ENCODE measurements at regions of chr10 and their contacts with region 1.

Region 1: DNA sequence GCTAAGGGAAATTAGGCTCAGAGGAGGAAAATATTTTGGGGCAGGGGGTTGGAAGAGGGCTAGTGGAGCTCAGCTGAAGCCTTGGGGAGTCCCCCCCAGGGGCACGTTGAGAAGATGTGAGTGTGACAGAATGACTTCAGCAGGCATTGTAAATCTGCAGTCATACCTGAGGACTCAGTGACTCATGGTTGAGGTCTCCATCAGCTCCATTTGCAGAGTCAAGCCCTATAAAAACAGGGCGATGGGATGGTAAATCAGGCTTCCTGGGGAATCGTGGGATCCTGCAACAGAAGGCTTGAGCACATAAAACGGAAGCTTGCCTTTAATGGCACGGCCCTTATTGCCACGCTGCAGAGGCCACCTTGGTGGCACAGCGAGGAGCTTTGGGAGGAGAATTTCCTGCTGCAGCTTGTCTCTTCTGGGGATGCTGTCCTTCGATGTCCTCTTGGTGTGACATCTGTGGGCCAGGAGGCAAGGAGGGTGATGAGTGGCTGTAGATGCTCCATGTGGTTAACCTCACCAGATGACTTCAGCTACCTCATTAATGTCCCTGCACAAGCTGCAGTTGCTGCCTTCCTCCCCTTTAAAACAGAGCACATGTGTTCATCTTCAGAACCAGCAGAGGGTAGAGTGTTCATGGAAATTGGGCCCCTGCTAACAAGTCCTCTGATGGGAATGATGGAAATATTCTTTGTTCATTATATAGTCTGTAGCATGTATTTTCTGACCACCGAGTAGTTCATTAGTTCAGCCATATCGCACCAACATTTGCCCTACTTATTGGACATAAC is 285.9 kb downstream of the LRMDA start:
- DNase-seq: peak; percentile 74
- ATAC-seq: peak; percentile 76
- H3K4me3 ChIP-seq: no peak overlapping the region
- H3K27ac ChIP-seq: no peak overlapping the region
- H3K4me1 ChIP-seq: peaks cover 7% of the 10 kb centered on the region; the same call in 1 of the 2 replicates
- H3K27me3 ChIP-seq: peaks cover 44% of the 10 kb centered on the region
- CTCF ChIP-seq: peak; percentile 47; the same call in 1 of the 2 replicates

Region 2: GRCh38 chr10:73810735-73811465 is 1906.4 kb before region 1 on chr10:
- CTCF ChIA-PET with region 1: no interaction called
- POLR2A ChIA-PET with region 1: interaction called, 13 read pairs
- intact Hi-C with region 1: no loop called
- DNase-seq: peak; percentile 68
- ATAC-seq: peak; percentile 42
- H3K4me3 ChIP-seq: peak overlapping the region; percentile 79
- H3K27ac ChIP-seq: peak overlapping the region; percentile 22
- H3K4me1 ChIP-seq: peaks cover 4% of the 10 kb centered on the region
- H3K27me3 ChIP-seq: no peaks in the 10 kb centered on the region
- CTCF ChIP-seq: no peak

Region 3: DNA sequence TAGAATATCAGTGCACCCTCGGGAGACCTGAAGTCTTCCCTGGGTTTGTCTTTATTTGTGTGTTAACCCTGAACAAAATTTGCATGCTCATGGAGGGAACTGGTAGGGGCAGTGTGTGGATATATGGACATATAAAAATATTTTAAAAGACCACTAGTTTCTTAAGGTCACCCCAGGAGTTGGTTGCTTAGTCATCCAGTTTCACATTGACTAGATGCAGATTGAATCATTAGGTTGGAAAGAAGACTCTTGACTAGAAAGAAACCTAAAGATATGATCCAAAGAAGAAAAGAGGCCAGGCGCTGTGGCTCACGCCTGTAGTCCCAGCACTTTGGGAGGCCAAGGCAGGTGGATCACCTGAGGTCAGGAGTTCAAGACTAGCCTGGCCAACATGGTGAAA is 753.8 kb before region 1 on chr10:
- CTCF ChIA-PET with region 1: no interaction called
- POLR2A ChIA-PET with region 1: no interaction called
- intact Hi-C with region 1: no loop called
- DNase-seq: no peak
- ATAC-seq: no peak
- H3K4me3 ChIP-seq: no peak overlapping the region
- H3K27ac ChIP-seq: no peak overlapping the region
- H3K4me1 ChIP-seq: peaks cover 14% of the 10 kb centered on the region
- H3K27me3 ChIP-seq: no peaks in the 10 kb centered on the region
- CTCF ChIP-seq: no peak

Region 4: DNA sequence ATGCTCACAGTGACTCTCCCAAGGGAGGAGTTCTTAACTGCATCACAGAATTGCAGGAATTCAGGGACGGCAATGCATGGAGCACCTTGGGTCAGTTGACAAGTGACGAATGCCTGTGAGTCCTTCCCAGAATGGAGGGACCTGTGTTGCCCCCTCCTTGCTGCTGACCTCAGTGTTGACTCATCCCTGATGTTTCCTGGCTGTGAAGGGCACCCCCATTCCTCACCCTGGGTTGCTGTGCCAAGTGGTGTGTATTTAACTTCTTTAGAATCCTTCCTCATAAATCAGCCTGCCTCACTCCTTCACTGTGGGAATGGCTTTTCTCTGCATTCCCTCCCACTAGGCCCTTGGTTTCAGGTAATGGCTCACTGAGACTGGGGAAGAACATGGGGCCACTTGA is 187.0 kb before region 1 on chr10:
- CTCF ChIA-PET with region 1: no interaction called
- POLR2A ChIA-PET with region 1: no interaction called
- intact Hi-C with region 1: no loop called
- DNase-seq: peak; percentile 98
- ATAC-seq: peak; percentile 69
- H3K4me3 ChIP-seq: no peak overlapping the region
- H3K27ac ChIP-seq: peak overlapping the region; percentile 85
- H3K4me1 ChIP-seq: peaks cover 45% of the 10 kb centered on the region
- H3K27me3 ChIP-seq: no peaks in the 10 kb centered on the region
- CTCF ChIP-seq: no peak

Region 5: GRCh38 chr10:75755528-75755927 is 38.2 kb after region 1 on chr10:
- CTCF ChIA-PET with region 1: no interaction called
- POLR2A ChIA-PET with region 1: no interaction called
- intact Hi-C with region 1: no loop called
- DNase-seq: no peak
- ATAC-seq: no peak
- H3K4me3 ChIP-seq: no peak overlapping the region
- H3K27ac ChIP-seq: no peak overlapping the region
- H3K4me1 ChIP-seq: no peaks in the 10 kb centered on the region
- H3K27me3 ChIP-seq: peaks cover 58% of the 10 kb centered on the region
- CTCF ChIP-seq: no peak